Activated CD4-positive, alpha-beta T cell treated with anti-CD3 and anti-CD28 coated beads, Interleukin-2, amount 10 ng/mL, durations not matched to agents 24 days and 14 days (primary cell): ENCODE measurements at regions of chr3 and their contacts with region 1.

Region 1: DNA sequence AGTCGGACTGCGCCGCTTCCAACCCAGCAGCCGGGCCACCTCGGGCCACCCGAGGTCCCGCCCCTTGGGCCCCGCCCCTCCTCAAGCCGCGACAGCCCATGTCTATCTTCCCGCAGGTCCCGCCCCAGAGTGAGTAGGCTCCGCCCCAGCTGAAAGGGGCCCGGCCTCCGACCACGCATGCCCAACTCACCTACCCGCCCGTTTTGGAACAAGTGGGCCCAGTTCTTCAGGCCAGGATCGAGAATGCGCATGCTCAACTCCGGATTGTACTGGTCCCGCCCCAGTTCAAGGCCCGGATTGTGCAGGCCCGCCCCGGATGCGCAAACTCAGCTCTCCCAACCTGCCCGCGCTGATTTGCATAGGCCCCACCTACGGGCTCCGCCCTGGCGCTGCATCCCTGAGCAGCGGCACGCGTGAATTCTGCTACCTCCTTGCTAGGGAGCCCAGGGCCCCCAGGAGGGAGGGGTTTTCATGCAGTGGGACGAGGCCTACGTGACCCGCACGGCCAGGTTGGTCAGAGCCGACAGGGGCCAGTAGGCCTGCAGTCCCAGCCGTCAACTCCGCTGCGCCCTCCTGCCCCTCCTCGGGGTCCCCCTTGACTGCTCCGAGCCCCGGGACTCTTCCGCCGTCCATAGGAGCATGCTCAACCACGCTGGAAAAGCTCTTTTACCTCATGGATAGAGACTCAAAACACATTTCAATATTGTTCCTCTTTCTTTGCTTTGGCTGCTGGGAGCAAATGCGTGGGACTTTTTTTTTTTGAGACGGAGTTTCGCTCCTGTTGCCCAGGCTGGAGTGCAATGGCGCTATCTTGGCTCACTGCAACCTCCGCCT is at the start of gene PFKFB4:
- DNase-seq: peak; percentile 100
- H3K4me3 Mint-ChIP-seq: peak within 1 kb of the TSS; percentile 93
- H3K27ac Mint-ChIP-seq: peak within 1 kb of the TSS; percentile 97
- H3K4me1 Mint-ChIP-seq: peaks cover 48% of the 10 kb centered on the region
- H3K27me3 Mint-ChIP-seq: no peaks in the 10 kb centered on the region
- total RNA-seq, gene PFKFB4: 38.2 and 44.0 TPM in 2 replicates

Region 2: DNA sequence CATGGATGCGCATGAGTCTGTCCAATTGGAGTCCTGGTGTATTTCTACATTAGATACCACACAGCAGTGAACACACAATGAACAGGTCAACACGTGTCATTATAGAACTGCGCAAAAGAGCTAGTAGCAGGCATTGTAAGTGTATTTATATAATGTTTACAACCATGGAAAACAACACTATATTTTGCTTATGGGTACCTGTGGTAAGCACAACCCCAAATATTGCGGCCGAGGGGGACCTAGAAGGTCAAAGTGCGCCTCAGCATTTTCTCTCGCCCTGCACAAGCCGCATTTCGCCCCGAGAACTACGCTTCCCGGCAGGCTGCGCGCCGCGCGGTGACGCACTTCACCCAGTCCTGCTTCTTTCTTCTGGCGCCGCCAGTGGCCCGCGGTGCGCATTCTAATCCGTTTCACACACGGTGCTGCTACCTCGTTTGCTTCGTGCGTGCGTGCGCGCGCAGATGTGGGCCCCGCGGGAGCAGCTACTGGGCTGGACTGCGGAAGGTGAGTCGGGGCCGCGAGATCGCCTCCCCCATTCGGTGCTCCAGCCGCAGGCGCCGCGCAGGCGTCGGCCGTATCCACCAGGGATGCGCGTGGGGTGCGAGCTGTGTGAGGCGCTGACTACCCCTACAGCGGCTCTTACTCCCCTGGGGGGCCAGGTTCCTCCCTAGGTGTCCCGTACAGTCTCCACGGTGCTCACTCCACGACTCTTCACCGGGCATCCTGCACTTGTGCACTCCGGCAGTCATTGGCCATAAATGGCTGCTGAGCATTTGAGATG is 316.1 kb before region 1 on chr3 and contains the start of gene ZNF589:
- intact Hi-C with region 1: loop called (anchors 2 kb)
- DNase-seq: peak; percentile 98
- H3K4me3 Mint-ChIP-seq: peak within 1 kb of the TSS; percentile 90
- H3K27ac Mint-ChIP-seq: peak within 1 kb of the TSS; percentile 94
- H3K4me1 Mint-ChIP-seq: peaks cover 20% of the 10 kb centered on the region
- H3K27me3 Mint-ChIP-seq: no peaks in the 10 kb centered on the region
- total RNA-seq, gene ZNF589: 38.1 and 39.9 TPM in 2 replicates

Region 3: DNA sequence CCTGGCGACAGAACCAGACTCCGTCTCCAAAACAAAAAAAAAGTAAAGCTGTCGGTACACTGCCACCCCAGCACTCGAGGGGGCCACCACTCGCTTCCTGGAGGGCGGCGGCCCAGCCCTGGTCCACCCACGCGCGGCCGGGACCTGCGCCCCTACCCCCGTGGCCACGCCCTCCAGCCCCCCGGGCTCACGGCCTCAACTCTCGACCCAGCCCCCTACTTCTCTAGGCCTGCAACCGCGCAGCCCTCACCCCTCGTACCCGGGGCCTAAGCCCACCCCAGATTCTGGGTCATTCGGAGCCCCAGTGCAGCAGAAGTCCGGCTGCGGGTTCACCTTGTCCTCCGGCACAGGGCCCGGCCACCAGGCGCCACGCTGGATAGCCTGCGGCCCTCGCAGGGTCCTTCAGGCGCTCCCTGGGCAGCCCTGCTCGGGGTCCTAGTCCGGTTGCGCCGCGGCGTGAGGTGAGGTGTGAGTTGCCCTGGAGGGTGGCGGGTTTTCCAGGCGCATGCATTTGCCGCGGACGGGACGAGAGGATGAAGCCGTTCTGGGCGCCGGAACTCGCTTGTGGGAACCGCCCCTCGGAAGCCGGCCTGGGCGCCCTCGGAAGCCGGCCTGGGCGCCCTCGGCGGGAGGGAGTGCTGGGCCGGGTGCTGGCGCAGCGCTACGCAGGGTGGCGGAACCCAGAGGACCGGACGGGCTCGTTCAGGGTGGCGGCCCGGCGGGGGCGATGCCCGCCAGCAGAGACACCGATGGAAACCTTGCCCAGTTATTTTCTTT is 255.8 kb before region 1 on chr3:
- intact Hi-C with region 1: loop called (anchors 1 kb)
- DNase-seq: peak; percentile 97
- H3K4me3 Mint-ChIP-seq: peak within 1 kb of the TSS; percentile 96
- H3K27ac Mint-ChIP-seq: peak within 1 kb of the TSS; percentile 99
- H3K4me1 Mint-ChIP-seq: peaks cover 23% of the 10 kb centered on the region
- H3K27me3 Mint-ChIP-seq: peaks cover 14% of the 10 kb centered on the region

Region 4: GRCh38 chr3:48472915-48473616 is 83.9 kb before region 1 on chr3:
- intact Hi-C with region 1: loop called (anchors 1 kb)
- DNase-seq: peak; percentile 98
- H3K4me3 Mint-ChIP-seq: peak overlapping the region; percentile 85
- H3K27ac Mint-ChIP-seq: peak overlapping the region; percentile 97
- H3K4me1 Mint-ChIP-seq: peaks cover 47% of the 10 kb centered on the region
- H3K27me3 Mint-ChIP-seq: no peaks in the 10 kb centered on the region

Region 5: DNA sequence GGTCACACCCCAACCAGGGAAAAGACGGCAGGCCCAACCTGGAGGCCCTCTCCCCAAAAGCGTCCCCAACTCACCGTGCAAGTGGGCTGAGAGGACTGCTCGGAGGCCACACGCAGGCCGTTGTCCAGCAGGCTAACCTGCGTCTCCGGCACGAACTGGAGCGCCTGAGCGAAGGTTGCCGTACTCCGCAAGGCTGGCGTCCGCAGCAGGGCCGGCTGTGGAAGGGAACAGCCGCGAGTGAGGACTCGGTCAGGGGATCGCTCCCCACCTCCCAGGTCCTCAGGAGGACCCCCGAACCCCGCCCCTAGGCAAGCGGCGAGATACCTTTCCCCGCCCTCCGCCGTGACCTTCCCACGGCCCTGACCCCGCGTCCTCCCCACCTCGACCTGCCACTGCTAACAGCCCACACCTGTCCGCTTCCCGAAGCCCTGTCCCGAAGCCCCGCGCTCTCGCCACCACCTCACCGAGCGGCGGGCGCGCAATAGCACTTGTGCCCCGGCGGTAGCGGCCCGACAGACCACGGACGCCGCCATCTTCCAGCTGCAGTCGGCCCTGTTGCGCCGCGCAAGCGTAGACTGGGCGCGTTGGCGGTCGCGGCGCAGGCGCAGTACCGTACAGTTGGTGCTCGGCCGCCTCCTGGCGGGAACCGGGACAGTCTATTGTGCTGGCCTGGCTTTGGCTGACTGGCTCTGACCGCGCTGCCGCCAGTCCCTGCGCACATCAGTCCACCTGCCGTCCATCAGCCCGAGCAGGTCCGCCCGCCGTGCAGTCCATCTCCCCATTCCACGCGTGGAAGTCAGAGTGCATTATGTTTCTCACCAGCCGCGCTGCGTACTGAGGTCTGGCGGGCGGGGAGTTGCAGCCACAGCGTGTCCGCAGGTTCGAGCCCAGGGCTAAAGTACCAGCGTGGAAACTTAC is 52.3 kb after region 1 on chr3 and contains the start of gene UQCRC1:
- intact Hi-C with region 1: loop called (anchors 1 kb)
- DNase-seq: peak; percentile 98
- H3K4me3 Mint-ChIP-seq: peak within 1 kb of the TSS; percentile 99
- H3K27ac Mint-ChIP-seq: peak within 1 kb of the TSS; percentile 99
- H3K4me1 Mint-ChIP-seq: peaks cover 22% of the 10 kb centered on the region
- H3K27me3 Mint-ChIP-seq: no peaks in the 10 kb centered on the region
- total RNA-seq, gene UQCRC1: 224 and 235 TPM in 2 replicates

Region 6: DNA sequence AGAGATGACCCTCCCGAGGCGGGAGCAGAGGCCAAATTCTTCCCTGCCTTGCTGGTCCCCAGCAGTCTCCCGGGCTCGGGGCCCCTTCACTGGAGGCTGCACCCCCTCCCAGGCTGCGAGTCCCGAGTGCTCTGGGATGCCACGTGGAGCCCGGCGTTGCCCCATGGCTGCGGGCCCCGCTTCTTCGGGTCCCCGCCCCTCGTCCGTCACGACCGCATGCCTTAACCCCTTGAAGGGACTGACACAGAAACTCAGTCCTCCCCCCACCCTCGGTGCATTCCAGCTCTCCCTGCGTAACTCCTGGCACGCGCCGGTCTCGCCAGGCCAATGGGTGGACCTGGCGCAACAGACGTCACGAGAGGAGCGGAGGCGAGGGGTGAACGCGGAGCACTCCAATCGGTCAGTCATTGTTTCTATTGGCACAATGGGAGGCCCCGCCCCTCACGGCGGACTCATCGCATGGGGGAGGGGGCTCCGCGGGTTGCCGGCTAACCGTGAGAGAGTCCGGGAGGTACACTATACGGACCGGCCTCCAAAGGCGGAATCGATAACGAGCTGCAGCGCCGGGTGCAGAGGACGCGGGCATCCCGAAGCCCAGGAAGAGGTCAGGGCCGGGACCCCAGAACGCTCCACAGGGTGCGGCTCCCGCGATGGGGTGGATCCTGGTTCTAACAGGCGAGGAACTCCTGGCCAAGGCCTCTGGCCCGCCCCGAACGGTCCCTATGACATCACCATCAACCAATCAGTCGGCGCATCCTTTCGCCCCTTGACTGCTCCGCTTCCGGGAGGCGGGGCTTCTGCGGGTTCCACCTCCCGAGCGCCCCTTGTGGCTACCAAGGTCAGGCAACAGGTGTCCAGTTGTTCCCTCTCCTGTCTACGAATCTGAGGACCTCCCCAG is 106.7 kb after region 1 on chr3:
- intact Hi-C with region 1: loop called (anchors 2 kb)
- DNase-seq: peak; percentile 98
- H3K4me3 Mint-ChIP-seq: peak overlapping the region; percentile 96
- H3K27ac Mint-ChIP-seq: peak overlapping the region; percentile 98
- H3K4me1 Mint-ChIP-seq: peaks cover 11% of the 10 kb centered on the region
- H3K27me3 Mint-ChIP-seq: peaks cover 9% of the 10 kb centered on the region